Caco-2 (cell line): ENCODE measurements at regions of chr12 and their contacts with region 1.

Region 1: DNA sequence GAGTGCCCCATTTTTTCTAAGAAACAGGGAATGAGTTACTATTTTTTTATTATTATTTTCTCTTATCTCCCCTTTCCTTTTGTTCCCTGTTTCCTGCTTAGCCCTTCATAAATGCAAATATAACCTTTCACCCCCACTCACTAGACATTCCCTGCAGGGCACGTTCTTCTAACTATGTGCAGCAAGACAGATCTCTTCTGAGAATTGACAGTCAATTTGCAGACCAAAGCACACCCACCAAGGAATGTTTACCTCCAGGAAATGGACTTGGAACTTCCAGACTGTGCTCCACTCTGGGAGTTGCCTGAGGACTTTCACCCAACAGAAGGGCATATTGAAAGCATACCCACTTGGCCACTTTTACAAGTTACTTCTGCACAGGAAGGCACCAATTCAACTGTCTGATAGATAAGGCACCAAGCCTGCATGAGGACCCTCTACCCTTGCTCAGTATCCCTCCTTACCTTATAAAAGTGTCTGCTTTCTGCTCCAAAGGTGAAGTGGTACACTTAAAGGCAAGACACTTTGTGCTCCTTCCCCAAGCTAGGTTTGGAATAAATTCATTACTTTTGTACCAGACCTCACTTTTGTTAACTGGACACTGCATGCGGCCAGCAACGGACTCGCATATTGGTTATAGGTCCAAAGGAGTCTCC is 6.5 kb downstream of the TAS2R19 start:
- DNase-seq: peak; percentile 77 to 88
- H3K4me3 ChIP-seq: no peak overlapping the region
- H3K4me3 Mint-ChIP-seq: peak overlapping the region; percentile 1
- H3K27ac Mint-ChIP-seq: no peak overlapping the region
- H3K4me1 ChIP-seq: peaks cover 35% of the 10 kb centered on the region
- H3K4me1 Mint-ChIP-seq: peaks cover 23% of the 10 kb centered on the region
- H3K27me3 ChIP-seq: no peaks in the 10 kb centered on the region
- H3K27me3 Mint-ChIP-seq: no peaks in the 10 kb centered on the region
- CTCF ChIP-seq: no peak

Region 2: DNA sequence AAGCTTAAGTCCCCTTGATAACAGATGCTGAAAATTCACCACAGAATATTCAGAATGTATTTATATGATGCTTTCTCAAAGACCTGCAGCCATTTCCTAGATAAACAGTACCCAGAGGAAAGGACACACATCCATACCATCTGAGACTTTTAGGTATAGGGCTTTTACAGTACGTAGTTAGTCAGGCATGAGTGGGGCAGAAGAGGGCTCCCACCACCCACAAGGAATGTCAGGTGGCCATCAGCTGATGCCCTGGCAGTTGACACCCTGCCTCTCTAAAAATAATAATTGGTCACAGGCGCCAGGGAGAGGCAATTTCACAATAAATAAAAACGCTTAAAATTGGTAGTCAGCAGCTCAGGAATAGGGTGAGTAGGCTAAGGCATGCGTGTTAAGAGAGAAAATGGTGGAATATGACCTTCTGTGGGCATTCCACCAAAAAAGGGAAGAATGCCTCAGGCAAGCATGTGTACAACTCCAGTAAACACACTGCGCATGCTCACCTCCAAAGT is 54.0 kb after region 1 on chr12:
- CTCF ChIA-PET with region 1: no interaction called
- POLR2A ChIA-PET with region 1: no interaction called
- intact Hi-C with region 1: loop called (anchors 1 kb)
- DNase-seq: no peak
- H3K4me3 ChIP-seq: no peak overlapping the region
- H3K4me3 Mint-ChIP-seq: no peak overlapping the region
- H3K27ac Mint-ChIP-seq: no peak overlapping the region
- H3K4me1 ChIP-seq: no peaks in the 10 kb centered on the region
- H3K4me1 Mint-ChIP-seq: peaks cover 7% of the 10 kb centered on the region
- H3K27me3 ChIP-seq: no peaks in the 10 kb centered on the region
- H3K27me3 Mint-ChIP-seq: no peaks in the 10 kb centered on the region
- CTCF ChIP-seq: no peak

Region 3: GRCh38 chr12:11171145-11171968 is 155.5 kb after region 1 on chr12 and contains the start of gene SMIM10L1:
- CTCF ChIA-PET with region 1: no interaction called
- POLR2A ChIA-PET with region 1: no interaction called
- intact Hi-C with region 1: loop called (anchors 5 kb)
- DNase-seq: peak; percentile 96 to 97
- H3K4me3 ChIP-seq: peak within 1 kb of the TSS; percentile 98
- H3K4me3 Mint-ChIP-seq: peak within 1 kb of the TSS; percentile 99
- H3K27ac Mint-ChIP-seq: peak within 1 kb of the TSS; percentile 100
- H3K4me1 ChIP-seq: peaks cover 8% of the 10 kb centered on the region; the same call in 1 of the 2 replicates
- H3K4me1 Mint-ChIP-seq: peaks cover 28% of the 10 kb centered on the region
- H3K27me3 ChIP-seq: no peaks in the 10 kb centered on the region
- H3K27me3 Mint-ChIP-seq: no peaks in the 10 kb centered on the region
- CTCF ChIP-seq: peak in 1 of 2 experiments; percentile 8
- total RNA-seq, gene SMIM10L1: 22.4 and 24.9 TPM in 2 replicates